ENCODE measurements at regions of chrX and their contacts with region 1.

Region 1: DNA sequence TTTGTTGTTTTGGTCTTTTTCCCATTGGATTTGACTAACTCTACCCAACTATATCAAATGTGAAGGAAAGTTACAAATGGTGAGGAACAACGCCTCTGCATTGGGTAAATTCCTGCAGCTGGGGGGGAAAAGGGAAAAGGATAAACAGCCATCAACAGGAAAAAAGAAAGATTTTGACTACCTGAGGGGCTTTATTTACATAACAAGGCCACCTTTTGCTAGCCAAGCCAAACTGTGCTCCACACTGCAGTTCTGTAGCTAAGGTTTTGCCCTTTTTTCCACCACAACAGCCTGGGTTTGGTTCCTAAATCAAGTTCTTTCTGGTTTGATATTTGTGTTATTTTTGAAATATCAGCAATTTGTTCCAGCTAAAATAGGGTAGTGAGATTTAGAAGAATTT is 40.8 kb downstream of the RHOXF2B start:
- DNase-seq: no peak
- ATAC-seq: peak; percentile 47; the same call in 2 of the 3 replicates
- H3K4me3 ChIP-seq: no peak overlapping the region
- H3K27ac ChIP-seq: no peak overlapping the region
- H3K4me1 ChIP-seq: peaks cover 12% of the 10 kb centered on the region; the same call in 1 of the 2 replicates
- H3K27me3 ChIP-seq: no peaks in the 10 kb centered on the region
- CTCF ChIP-seq: no peak
- EP300 ChIP-seq: no peak
- POLR2A ChIP-seq: no peak
- RAD21 ChIP-seq: no peak

Region 2: GRCh38 chrX:119943185-119943988 is 93.3 kb before region 1 on chrX and contains the start of gene NKAP:
- CTCF ChIA-PET with region 1: no interaction called
- POLR2A ChIA-PET with region 1: no interaction called
- RAD21 ChIA-PET with region 1: no interaction called
- SMC1A ChIA-PET with region 1: no interaction called
- in situ Hi-C with region 1: no loop called
- intact Hi-C with region 1: no loop called
- DNase-seq: peak; percentile 73
- ATAC-seq: peak; percentile 91
- H3K4me3 ChIP-seq: peak within 1 kb of the TSS; percentile 62
- H3K27ac ChIP-seq: peak within 1 kb of the TSS; percentile 41
- H3K4me1 ChIP-seq: no peaks in the 10 kb centered on the region
- H3K27me3 ChIP-seq: no peaks in the 10 kb centered on the region; a peak in 1 of 4 replicates
- CTCF ChIP-seq: no peak
- EP300 ChIP-seq: no peak
- POLR2A ChIP-seq: peak; percentile 63
- RAD21 ChIP-seq: no peak
- polyA plus RNA-seq, gene NKAP: 2.4 to 5.2 TPM

Region 3: DNA sequence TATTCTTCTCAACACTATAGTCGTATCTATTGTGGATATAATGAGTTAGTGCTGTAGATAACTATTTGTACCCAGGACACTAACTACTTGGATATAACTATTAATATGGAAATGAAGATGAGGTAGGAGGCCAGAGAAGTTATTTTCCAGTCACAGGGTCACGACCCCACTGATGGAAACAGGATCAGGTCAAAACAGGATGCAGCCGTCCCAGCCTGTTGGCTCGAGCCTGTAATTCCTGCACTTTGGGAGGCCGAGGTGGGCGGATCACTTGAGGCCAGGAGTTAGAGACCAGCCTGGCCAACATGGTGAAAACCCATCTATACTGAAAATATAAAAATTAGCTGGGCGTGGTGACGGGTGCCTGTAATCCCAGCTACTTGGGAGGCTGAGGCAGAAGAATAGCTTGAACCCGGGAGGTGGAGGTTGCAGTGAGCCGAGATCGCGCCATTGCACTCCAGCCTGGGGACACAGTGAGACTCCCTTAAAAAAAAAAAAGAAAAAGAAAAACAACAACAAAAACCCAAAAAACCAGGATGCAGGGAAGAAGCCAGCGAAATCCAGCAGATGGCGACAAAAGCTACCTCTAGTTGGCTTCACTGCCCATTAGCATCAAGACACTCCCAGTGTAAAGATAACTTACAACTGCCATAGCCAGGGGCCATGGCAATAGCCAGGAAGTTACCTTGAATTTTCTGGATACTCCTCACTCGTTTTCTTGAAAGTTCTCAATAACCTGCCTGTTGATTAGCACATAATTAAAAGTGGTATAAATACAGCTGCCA is 55.2 kb before region 1 on chrX:
- CTCF ChIA-PET with region 1: interaction called, 22 read pairs
- POLR2A ChIA-PET with region 1: no interaction called
- RAD21 ChIA-PET with region 1: interaction called, 13 read pairs
- SMC1A ChIA-PET with region 1: interaction called, 4 read pairs
- in situ Hi-C with region 1: no loop called
- intact Hi-C with region 1: no loop called
- DNase-seq: no peak
- ATAC-seq: peak; percentile 90
- H3K4me3 ChIP-seq: no peak overlapping the region
- H3K27ac ChIP-seq: no peak overlapping the region
- H3K4me1 ChIP-seq: no peaks in the 10 kb centered on the region
- H3K27me3 ChIP-seq: no peaks in the 10 kb centered on the region; a peak in 1 of 4 replicates
- CTCF ChIP-seq: peak; percentile 61 to 67 (median 62)
- EP300 ChIP-seq: no peak
- POLR2A ChIP-seq: no peak
- RAD21 ChIP-seq: peak; percentile 61

Region 4: GRCh38 chrX:120144178-120144844 is 107.6 kb after region 1 on chrX:
- CTCF ChIA-PET with region 1: interaction called, 3 read pairs
- POLR2A ChIA-PET with region 1: no interaction called
- RAD21 ChIA-PET with region 1: interaction called, 5 read pairs
- SMC1A ChIA-PET with region 1: interaction called, 3 read pairs
- in situ Hi-C with region 1: loop called (anchors 10 kb)
- intact Hi-C with region 1: no loop called
- DNase-seq: no peak
- ATAC-seq: peak; percentile 62
- H3K4me3 ChIP-seq: peak overlapping the region; percentile 22; the same call in 1 of the 2 replicates
- H3K27ac ChIP-seq: no peak overlapping the region
- H3K4me1 ChIP-seq: no peaks in the 10 kb centered on the region
- H3K27me3 ChIP-seq: no peaks in the 10 kb centered on the region
- CTCF ChIP-seq: no peak
- EP300 ChIP-seq: no peak
- POLR2A ChIP-seq: no peak
- RAD21 ChIP-seq: no peak

Region 5: GRCh38 chrX:120207009-120207615 is 170.4 kb after region 1 on chrX:
- CTCF ChIA-PET with region 1: no interaction called
- POLR2A ChIA-PET with region 1: no interaction called
- RAD21 ChIA-PET with region 1: no interaction called
- SMC1A ChIA-PET with region 1: no interaction called
- in situ Hi-C with region 1: no loop called
- intact Hi-C with region 1: loop called (anchors 10 kb)
- DNase-seq: no peak
- ATAC-seq: no peak
- H3K4me3 ChIP-seq: no peak overlapping the region
- H3K27ac ChIP-seq: no peak overlapping the region
- H3K4me1 ChIP-seq: no peaks in the 10 kb centered on the region
- H3K27me3 ChIP-seq: no peaks in the 10 kb centered on the region
- CTCF ChIP-seq: no peak
- EP300 ChIP-seq: no peak
- POLR2A ChIP-seq: no peak
- RAD21 ChIP-seq: no peak

Measured in GM12878 (cell line).